Tibial artery (tissue), 4 donors: ENCODE measurements at regions of chr13 and their contacts with region 1.

Region 1: GRCh38 chr13:71902676-71903075 is 35.7 kb upstream of the DACH1 start:
- DNase-seq: no peak
- H3K4me3 ChIP-seq: no peak overlapping the region
- H3K27ac ChIP-seq: no peak overlapping the region
- H3K4me1 ChIP-seq: no peaks in the 10 kb centered on the region
- H3K27me3 ChIP-seq: no peaks in the 10 kb centered on the region
- CTCF ChIP-seq: no peak

Region 2: DNA sequence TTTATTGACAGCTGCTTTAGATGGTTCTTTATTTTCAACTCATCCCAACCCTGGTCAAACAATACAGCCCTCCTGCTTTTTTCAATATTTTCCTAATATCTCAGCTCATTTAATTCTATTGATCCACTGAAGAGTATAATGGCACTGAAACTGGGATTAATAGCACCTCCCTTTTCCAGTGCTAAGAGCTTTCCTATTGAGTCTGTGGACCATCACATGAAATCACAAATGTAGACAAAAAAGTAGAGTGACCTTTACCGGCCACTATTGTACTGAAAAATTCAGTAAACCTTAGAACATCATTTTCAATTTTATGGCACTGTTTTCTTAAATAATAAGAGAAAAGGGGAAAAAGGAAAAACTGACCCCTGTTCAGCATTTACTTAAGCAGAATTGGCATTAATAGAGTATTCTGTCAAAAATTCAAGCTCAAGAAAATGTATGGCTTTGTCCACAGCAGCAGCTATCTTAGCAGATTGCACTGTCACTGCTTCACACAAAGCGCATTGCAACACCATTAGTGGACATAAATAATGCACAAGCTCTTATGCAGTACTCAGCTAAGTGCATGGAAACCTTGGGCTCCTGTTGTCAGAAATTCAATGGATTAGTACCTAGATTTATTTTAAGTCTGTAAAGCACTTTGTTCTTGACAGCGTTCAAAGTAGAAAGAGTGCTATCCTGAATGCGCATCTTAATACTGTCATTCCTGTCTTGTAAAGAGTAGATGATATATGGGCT is 943.5 kb before region 1 on chr13:
- intact Hi-C with region 1: loop called (anchors 5 kb)
- DNase-seq: no peak
- H3K4me3 ChIP-seq: no peak overlapping the region
- H3K27ac ChIP-seq: no peak overlapping the region
- H3K4me1 ChIP-seq: no peaks in the 10 kb centered on the region
- H3K27me3 ChIP-seq: no peaks in the 10 kb centered on the region
- CTCF ChIP-seq: no peak

Region 3: DNA sequence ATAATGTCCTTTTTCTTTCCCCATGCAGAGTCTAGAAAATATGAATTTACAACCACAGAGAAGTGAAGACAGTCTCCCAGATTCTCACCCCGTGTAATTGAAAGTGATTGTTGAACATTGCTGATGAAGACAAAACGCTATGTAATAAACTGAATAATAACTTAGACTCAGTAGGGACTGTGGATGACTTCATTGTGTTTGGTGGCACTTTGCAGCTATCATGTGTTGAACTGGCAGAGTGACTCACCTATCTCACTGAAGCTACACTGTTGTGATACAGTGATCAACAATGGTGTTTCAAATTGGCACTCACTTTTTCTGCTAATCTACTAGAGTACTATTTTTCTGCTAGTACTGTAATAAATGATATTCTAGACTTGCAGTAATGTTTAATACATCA is 296.9 kb before region 1 on chr13:
- intact Hi-C with region 1: no loop called
- DNase-seq: no peak
- H3K4me3 ChIP-seq: no peak overlapping the region
- H3K27ac ChIP-seq: no peak overlapping the region
- H3K4me1 ChIP-seq: no peaks in the 10 kb centered on the region
- H3K27me3 ChIP-seq: no peaks in the 10 kb centered on the region
- CTCF ChIP-seq: no peak

Region 4: DNA sequence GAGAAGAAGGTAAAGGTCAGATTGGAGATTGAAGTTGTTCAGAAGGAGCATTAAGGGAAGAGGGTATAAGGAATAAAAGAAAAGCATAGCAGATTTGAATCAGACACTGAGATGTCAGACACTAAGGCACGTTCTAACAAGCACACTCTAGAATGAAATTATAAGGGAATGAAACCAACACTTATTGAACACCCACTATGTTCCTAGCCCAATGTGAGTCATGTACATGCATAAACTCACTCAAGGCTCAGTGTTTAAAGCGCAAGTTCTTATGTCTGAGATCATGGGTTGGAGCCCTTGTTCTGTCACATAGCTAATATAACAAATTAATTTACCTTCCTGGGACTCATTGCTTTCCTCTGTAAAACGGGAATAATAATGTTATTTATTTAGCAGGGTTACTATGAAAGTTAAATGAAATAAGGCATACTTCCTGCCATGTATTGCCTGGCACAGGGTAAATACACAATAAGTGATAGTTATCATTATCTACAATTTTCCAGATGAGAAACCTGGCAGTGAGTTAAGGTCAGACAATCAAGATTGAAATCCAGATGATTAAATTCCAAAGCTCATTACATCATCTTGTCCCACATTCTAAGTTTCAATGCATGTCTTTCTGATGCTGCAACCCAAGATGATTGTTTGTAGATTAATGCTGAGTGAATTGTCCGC is 32.6 kb after region 1 on chr13:
- intact Hi-C with region 1: no loop called
- DNase-seq: no peak
- H3K4me3 ChIP-seq: no peak overlapping the region
- H3K27ac ChIP-seq: no peak overlapping the region
- H3K4me1 ChIP-seq: no peaks in the 10 kb centered on the region
- H3K27me3 ChIP-seq: no peaks in the 10 kb centered on the region
- CTCF ChIP-seq: no peak